ENCODE measurements at regions of chr21 and their contacts with region 1.

Region 1: GRCh38 chr21:37244501-37245083 is 22.5 kb downstream of the VPS26C start:
- DNase-seq: no peak
- ATAC-seq: no peak

Region 2: GRCh38 chr21:36820176-36821031 is 424.2 kb before region 1 on chr21:
- intact Hi-C with region 1: no loop called
- DNase-seq: no peak
- ATAC-seq: no peak

Region 3: DNA sequence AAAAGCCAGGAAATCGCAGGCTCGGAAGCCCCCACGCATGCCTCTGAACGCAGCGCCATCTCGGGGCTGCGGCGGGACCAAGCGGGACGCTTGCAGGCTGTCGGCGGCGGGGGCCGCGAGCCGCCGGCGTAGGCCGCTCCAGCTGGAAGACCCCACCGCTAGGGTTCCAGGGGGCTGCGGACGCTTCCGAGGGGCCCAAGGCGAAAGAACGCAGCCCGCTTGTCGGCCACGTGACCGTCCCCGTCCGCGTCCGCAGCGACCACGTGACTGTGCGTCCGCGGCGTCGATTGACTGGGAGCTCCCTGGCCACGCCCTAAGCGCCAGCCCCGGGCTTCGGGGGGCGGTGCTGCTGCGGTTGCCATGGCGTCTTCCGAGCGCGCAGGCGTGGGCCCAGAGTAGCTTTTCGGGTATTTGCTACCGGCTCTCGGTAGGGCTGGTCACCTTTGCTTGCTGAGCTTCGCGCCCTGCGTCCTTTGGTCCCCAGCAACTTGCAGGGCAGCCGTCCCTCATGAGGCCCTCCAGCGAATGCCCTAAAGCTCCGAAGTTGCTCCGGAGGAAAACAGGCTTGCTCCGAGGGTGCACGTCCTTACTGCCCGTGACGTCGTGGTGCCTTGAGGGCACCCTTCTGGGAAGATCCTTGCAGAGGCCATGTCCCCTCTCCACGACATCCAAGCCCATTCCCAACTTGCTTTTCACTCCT is 319.2 kb after region 1 on chr21:
- intact Hi-C with region 1: loop called in 1 of 2 experiments (anchors 10 kb)
- DNase-seq: peak; percentile 93 to 95
- ATAC-seq: peak; percentile 95